Mammary epithelial cell (primary cell): ENCODE measurements at regions of chr1 and their contacts with region 1.

Region 1: DNA sequence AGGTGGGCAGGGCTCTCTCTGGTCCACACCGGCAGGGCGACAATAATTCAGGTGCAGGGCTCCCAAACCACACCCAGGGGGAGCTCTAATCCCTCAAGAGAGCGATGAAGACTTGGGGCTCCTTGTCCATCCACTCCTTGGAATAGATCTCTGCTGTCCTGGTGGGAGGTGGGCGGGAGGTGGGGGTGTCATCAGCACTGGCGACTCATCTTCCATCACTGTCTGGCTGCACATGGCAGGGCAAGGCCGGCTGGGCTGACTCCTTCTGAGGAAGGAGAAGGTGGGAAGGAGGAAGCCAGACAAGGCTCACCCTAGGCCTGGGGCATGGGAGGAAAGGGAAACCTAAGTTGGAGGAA is 29.3 kb downstream of the TNNT2 start:
- DNase-seq: peak; percentile 45
- H3K4me3 ChIP-seq: no peak overlapping the region
- H3K27ac ChIP-seq: no peak overlapping the region
- H3K4me1 ChIP-seq: peaks cover 20% of the 10 kb centered on the region
- H3K27me3 ChIP-seq: no peaks in the 10 kb centered on the region
- CTCF ChIP-seq: peak; percentile 72 to 84

Region 2: GRCh38 chr1:201245092-201245491 is 103.1 kb before region 1 on chr1:
- CTCF ChIA-PET with region 1: no interaction called
- dilution Hi-C with region 1: no loop called
- in situ Hi-C with region 1: loop called in 1 of 2 experiments (anchors 10 kb)
- intact Hi-C with region 1: no loop called
- DNase-seq: no peak
- H3K4me3 ChIP-seq: no peak overlapping the region
- H3K27ac ChIP-seq: no peak overlapping the region
- H3K4me1 ChIP-seq: no peaks in the 10 kb centered on the region
- H3K27me3 ChIP-seq: peaks cover 4% of the 10 kb centered on the region
- CTCF ChIP-seq: no peak

Region 3: GRCh38 chr1:201288766-201289165 is 59.4 kb before region 1 on chr1:
- CTCF ChIA-PET with region 1: interaction called, 7 read pairs
- dilution Hi-C with region 1: no loop called
- in situ Hi-C with region 1: no loop called
- intact Hi-C with region 1: loop called (anchors 1 kb)
- DNase-seq: peak; percentile 67
- H3K4me3 ChIP-seq: peak overlapping the region in 1 of 3 experiments; percentile 21
- H3K27ac ChIP-seq: peak overlapping the region; percentile 77
- H3K4me1 ChIP-seq: peaks cover 72% of the 10 kb centered on the region
- H3K27me3 ChIP-seq: no peaks in the 10 kb centered on the region
- CTCF ChIP-seq: peak in 1 of 2 donors; percentile 50

Region 4: GRCh38 chr1:201361652-201362504 is 13.7 kb after region 1 on chr1:
- CTCF ChIA-PET with region 1: interaction called, 4 read pairs
- dilution Hi-C with region 1: no loop called
- in situ Hi-C with region 1: no loop called
- intact Hi-C with region 1: loop called (anchors 1 kb)
- DNase-seq: peak; percentile 29
- H3K4me3 ChIP-seq: no peak overlapping the region
- H3K27ac ChIP-seq: no peak overlapping the region
- H3K4me1 ChIP-seq: peaks cover 11% of the 10 kb centered on the region
- H3K27me3 ChIP-seq: no peaks in the 10 kb centered on the region
- CTCF ChIP-seq: peak; percentile 86 to 93

Region 5: DNA sequence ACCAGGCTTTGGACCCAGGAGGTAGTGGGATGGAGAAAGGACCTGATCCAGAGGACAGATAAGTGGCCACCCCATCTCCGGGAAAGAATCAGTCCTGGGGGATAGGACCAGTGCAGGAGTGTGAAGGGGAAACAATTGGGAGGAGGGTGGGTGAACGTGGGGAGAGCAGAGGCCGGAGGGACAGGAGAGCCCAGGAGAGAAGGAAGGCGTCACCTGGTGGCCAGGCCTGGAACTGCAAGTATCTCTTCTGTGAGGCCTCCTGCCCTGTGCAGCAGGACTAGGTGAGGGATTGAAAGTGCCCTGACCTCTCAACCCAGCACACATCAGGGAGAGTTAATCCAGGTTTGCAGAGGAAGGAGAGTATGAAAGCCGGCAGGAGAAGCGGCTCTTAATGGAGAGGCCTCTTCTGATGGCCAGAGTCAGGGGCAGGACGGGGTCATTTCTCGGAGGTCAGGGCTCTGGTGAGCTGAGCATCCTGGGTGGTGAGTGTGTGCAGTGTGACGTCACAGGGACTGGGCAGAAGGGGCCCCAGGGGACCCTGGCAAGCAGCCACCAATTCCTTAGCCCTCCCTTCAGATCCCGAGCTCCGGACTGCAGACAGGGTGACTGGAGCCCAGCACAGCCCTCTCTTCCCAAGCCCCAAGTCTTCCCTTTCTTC is 60.1 kb after region 1 on chr1:
- CTCF ChIA-PET with region 1: no interaction called
- dilution Hi-C with region 1: no loop called
- in situ Hi-C with region 1: no loop called
- intact Hi-C with region 1: loop called (anchors 1 kb)
- DNase-seq: peak; percentile 63
- H3K4me3 ChIP-seq: no peak overlapping the region
- H3K27ac ChIP-seq: no peak overlapping the region
- H3K4me1 ChIP-seq: no peaks in the 10 kb centered on the region
- H3K27me3 ChIP-seq: no peaks in the 10 kb centered on the region
- CTCF ChIP-seq: peak; percentile 96 to 98

Region 6: GRCh38 chr1:201419746-201420607 is 71.8 kb after region 1 on chr1:
- CTCF ChIA-PET with region 1: no interaction called
- dilution Hi-C with region 1: no loop called
- in situ Hi-C with region 1: no loop called
- intact Hi-C with region 1: no loop called
- DNase-seq: no peak
- H3K4me3 ChIP-seq: no peak overlapping the region
- H3K27ac ChIP-seq: no peak overlapping the region
- H3K4me1 ChIP-seq: no peaks in the 10 kb centered on the region
- H3K27me3 ChIP-seq: no peaks in the 10 kb centered on the region
- CTCF ChIP-seq: no peak